CD14-positive monocyte (primary cell): ENCODE measurements at regions of chr17 and their contacts with region 1.

Region 1: GRCh38 chr17:45197555-45198334 is 23.9 kb upstream of the FMNL1 start:
- DNase-seq: peak; percentile 86 to 89 (median 87)
- H3K4me3 ChIP-seq: no peak overlapping the region
- H3K4me3 Mint-ChIP-seq: peak overlapping the region in 1 of 2 donors; percentile 34
- H3K27ac ChIP-seq: no peak overlapping the region
- H3K27ac Mint-ChIP-seq: peak overlapping the region in 4 of 7 donors; percentile 40 to 76 (median 66)
- H3K4me1 ChIP-seq: peaks cover 42 to 51% of the 10 kb centered on the region in 2 donors
- H3K4me1 Mint-ChIP-seq: peaks cover 40% of the 10 kb centered on the region
- H3K27me3 ChIP-seq: no peaks in the 10 kb centered on the region
- H3K27me3 Mint-ChIP-seq: peaks cover 0 to 4% (median 2%) of the 10 kb centered on the region in 3 donors
- CTCF ChIP-seq: peak; percentile 99

Region 2: GRCh38 chr17:45161019-45161825 is 36.5 kb before region 1 on chr17:
- intact Hi-C with region 1: loop called in 1 of 2 experiments (anchors 5 kb)
- DNase-seq: peak; percentile 99 to 100 (median 100)
- H3K4me3 ChIP-seq: peak overlapping the region; percentile 85 to 92 (median 86)
- H3K4me3 Mint-ChIP-seq: peak overlapping the region; percentile 98 to 100
- H3K27ac ChIP-seq: peak overlapping the region; percentile 94 to 97
- H3K27ac Mint-ChIP-seq: peak overlapping the region; percentile 96 to 100 (median 99)
- H3K4me1 ChIP-seq: peaks cover 60 to 76% of the 10 kb centered on the region in 2 donors
- H3K4me1 Mint-ChIP-seq: peaks cover 62% of the 10 kb centered on the region
- H3K27me3 ChIP-seq: no peaks in the 10 kb centered on the region
- H3K27me3 Mint-ChIP-seq: no peaks in the 10 kb centered on the region
- CTCF ChIP-seq: no peak

Region 3: DNA sequence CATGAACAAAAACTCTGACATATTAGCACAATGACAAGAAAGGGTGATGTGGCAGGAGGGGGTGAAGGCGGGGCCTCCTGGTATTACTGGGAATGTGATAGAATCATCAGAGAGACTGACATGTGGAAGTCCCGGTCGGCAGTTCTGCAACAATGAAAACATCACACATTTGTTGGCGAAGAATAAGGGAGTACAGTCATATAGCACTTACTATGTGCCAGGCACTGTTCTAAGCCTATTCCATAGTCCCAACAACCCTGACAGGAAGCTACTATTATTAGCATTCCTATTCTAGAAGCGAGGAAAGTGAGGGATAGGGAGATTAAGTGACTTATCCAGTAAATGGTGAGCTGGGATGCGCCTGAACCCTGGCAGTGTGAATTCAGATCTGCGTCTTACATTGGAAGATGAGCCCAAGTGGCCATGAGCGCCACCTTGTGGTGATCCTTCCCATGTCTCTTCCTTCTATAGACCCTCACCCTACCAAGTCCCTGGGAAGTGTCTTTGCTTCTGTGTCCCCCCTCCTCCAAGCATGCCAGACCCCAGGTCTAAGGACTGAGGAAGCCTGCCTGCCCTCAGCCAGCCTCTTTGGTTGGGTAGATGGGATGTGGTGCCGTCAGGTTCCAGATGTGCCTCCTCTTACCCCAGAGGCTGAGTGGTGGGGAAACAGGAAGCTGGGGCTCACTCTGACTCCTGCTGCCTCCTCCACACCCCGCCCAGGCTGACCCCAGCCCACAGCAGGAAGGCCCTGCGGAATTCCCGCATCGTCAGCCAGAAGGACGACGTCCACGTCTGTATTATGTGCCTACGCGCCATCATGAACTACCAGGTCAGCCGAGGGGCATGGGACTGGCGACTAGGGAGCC is 37.9 kb after region 1 on chr17:
- intact Hi-C with region 1: loop called in 1 of 2 experiments (anchors 5 kb)
- DNase-seq: peak; percentile 77 to 85 (median 78)
- H3K4me3 ChIP-seq: peak overlapping the region in 1 of 3 experiments; percentile 20
- H3K4me3 Mint-ChIP-seq: peak overlapping the region in 1 of 2 donors; percentile 65
- H3K27ac ChIP-seq: peak overlapping the region; percentile 19 to 62
- H3K27ac Mint-ChIP-seq: peak overlapping the region; percentile 76 to 90 (median 86)
- H3K4me1 ChIP-seq: peaks cover 53% of the 10 kb centered on the region in 2 donors
- H3K4me1 Mint-ChIP-seq: peaks cover 56% of the 10 kb centered on the region
- H3K27me3 ChIP-seq: no peaks in the 10 kb centered on the region
- H3K27me3 Mint-ChIP-seq: peaks cover 0 to 4% (median 4%) of the 10 kb centered on the region in 3 donors
- CTCF ChIP-seq: peak; percentile 92